ENCODE measurements at regions of chrX and their contacts with region 1.

Region 1: GRCh38 chrX:139882299-139882698 is 50.6 kb downstream of the ATP11C start:
- DNase-seq: no peak
- H3K4me3 ChIP-seq: no peak overlapping the region
- H3K27ac ChIP-seq: peak overlapping the region; percentile 69
- H3K4me1 ChIP-seq: peaks cover 19% of the 10 kb centered on the region
- H3K27me3 ChIP-seq: no peaks in the 10 kb centered on the region
- CTCF ChIP-seq: no peak

Region 2: GRCh38 chrX:139930916-139931645 is 48.8 kb after region 1 on chrX:
- intact Hi-C with region 1: loop called (anchors 1 kb)
- DNase-seq: peak; percentile 12
- H3K4me3 ChIP-seq: peak overlapping the region; percentile 83
- H3K27ac ChIP-seq: no peak overlapping the region
- H3K4me1 ChIP-seq: no peaks in the 10 kb centered on the region
- H3K27me3 ChIP-seq: no peaks in the 10 kb centered on the region
- CTCF ChIP-seq: no peak